ENCODE measurements at regions of chr2 and their contacts with region 1.

Region 1: DNA sequence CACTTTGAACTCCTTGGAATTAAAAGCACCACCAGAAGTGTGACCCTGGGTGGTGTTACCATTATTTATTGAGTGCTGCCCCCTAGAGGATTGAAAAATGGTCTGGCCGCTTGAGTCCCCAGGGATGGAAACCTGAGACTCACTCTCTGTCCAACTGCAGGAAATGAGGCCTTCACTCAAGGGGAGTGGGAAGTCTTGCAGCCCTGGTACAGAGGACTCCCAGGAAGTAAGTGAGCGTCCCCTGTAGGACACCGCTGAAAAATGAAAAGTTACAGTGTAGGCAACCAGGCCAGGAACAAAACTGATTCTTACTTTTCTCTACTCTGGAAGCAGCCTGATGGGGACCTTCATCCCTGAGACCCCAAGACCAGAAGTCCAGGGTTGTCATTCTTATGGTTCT is 2.2 kb upstream of the NRP2 start:
- DNase-seq: no peak
- H3K4me3 ChIP-seq: no peak overlapping the region
- H3K27me3 ChIP-seq: no peaks in the 10 kb centered on the region
- CTCF ChIP-seq: peak; percentile 68

Region 2: DNA sequence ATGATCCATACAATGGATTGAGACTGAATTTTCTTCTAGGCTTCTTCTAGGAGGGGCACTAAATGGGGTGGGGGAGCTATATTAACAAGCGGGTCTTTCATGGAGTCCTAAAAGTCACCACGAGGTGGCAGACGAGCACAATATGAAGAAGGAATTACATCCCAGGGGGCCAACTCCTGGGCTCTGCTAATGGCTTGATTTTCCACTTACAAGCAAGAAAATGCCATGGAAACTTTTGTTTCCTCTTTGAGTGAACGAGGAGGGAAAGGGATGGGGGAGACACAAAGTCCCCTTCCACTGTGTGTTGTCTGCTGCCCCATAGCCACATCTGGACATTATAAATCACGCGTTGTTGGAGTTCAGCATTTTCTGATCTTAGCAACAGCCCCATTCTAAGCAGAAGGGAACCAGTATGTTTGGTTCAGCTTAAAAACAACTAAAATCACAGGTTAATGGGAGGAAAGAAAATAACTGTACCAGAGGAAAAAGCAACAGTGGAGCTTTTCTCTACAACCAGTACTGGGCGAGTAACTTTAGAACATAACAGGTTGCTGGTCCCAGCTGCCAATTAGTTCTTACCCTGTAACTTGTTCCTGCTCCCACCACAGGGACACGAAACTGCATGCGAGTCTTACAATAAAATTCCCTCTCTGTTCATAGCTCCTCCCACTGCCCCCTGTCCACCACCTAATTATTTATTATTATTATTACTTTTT is 1419.7 kb before region 1 on chr2:
- CTCF ChIA-PET with region 1: interaction called, 19 read pairs
- POLR2A ChIA-PET with region 1: no interaction called
- DNase-seq: no peak
- H3K4me3 ChIP-seq: no peak overlapping the region
- H3K27me3 ChIP-seq: peaks cover 3% of the 10 kb centered on the region
- CTCF ChIP-seq: peak; percentile 72

Region 3: GRCh38 chr2:204871231-204871953 is 808.7 kb before region 1 on chr2:
- CTCF ChIA-PET with region 1: interaction called, 23 read pairs
- POLR2A ChIA-PET with region 1: no interaction called
- DNase-seq: no peak
- H3K4me3 ChIP-seq: no peak overlapping the region
- H3K27me3 ChIP-seq: no peaks in the 10 kb centered on the region
- CTCF ChIP-seq: peak; percentile 49

Region 4: DNA sequence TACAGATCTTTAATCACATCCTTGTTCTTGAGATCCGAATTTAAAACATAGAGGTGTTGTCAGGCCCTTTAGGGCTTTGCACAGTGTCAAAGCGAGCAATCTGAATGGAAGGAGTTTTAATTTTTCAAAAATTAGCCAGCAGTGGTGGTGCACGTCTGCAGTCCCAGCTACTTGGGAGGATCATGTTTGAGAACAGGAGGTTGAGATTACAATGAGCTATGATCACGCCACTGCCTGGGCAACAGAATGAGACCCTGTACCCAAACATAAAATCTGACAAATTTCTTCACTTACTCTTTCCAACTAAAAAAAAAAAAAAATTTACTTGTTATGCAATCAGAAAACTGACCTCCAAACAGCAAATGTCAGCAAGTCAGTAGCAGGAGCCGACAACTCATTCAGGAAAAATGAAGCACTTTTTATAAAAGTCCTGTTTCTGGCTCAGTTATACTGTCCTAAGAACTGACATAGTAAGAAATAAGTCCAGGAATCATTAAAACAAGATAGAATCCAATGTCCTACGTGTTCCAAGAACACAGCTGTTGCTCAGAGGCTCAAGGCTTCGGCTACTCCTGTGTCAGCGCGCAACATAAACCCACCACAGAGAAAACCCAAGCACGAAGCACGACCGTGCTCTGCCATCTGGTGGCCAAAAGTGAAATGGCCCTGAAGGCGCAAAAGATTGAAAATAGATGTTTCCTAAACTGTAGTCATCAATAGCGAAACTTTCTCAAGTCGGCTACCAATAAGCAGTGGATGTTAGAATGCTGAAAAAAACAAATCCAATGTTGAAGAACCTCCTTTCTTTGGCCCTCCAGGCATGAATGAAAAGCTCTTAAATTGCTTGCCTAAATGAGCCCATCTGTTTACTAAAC is 267.8 kb after region 1 on chr2:
- CTCF ChIA-PET with region 1: no interaction called
- POLR2A ChIA-PET with region 1: no interaction called
- DNase-seq: peak; percentile 16
- H3K4me3 ChIP-seq: no peak overlapping the region
- H3K27me3 ChIP-seq: 0 out of 2 replicates have a peak, but pooled peaks cover 1% of the 10 kb centered on the region
- CTCF ChIP-seq: peak; percentile 97